PC-9 (cell line): ENCODE measurements at regions of chr7 and their contacts with region 1.

Region 1: GRCh38 chr7:127651556-127652332 is at the start of gene SND1:
- DNase-seq: peak; percentile 98 to 100
- H3K4me3 ChIP-seq: peak within 1 kb of the TSS; percentile 86
- H3K27ac ChIP-seq: peak within 1 kb of the TSS; percentile 90
- H3K4me1 ChIP-seq: peaks cover 27% of the 10 kb centered on the region
- H3K27me3 ChIP-seq: no peaks in the 10 kb centered on the region
- CTCF ChIP-seq: no peak
- total RNA-seq, gene SND1: 219 and 273 TPM in 2 replicates

Region 2: GRCh38 chr7:127392566-127393367 is 259.0 kb before region 1 on chr7 and contains the start of gene ZNF800:
- CTCF ChIA-PET with region 1: no interaction called
- POLR2A ChIA-PET with region 1: no interaction called
- intact Hi-C with region 1: loop called (anchors 5 kb)
- DNase-seq: peak; percentile 58 to 90
- H3K4me3 ChIP-seq: peak within 1 kb of the TSS; percentile 99
- H3K27ac ChIP-seq: peak within 1 kb of the TSS; percentile 54
- H3K4me1 ChIP-seq: peaks cover 22% of the 10 kb centered on the region
- H3K27me3 ChIP-seq: no peaks in the 10 kb centered on the region
- CTCF ChIP-seq: no peak
- total RNA-seq, gene ZNF800: 32.4 and 32.6 TPM in 2 replicates